ENCODE measurements at regions of chr12 and their contacts with region 1.

Region 1: GRCh38 chr12:48157018-48157888 is at the start of gene ASB8:
- DNase-seq: peak; percentile 96
- ATAC-seq: peak; percentile 93
- H3K4me3 ChIP-seq: peak within 1 kb of the TSS; percentile 83 to 98
- H3K27ac ChIP-seq: peak within 1 kb of the TSS; percentile 36
- H3K4me1 ChIP-seq: peaks cover 8% of the 10 kb centered on the region in 2 experiments
- H3K27me3 ChIP-seq: no peaks in the 10 kb centered on the region
- CTCF ChIP-seq: peak; percentile 18 to 47 (median 44); a peak in 3 of 6 replicates
- POLR2A ChIP-seq: peak; percentile 73
- RAD21 ChIP-seq: no peak
- total RNA-seq, gene ASB8: 14.0 TPM

Region 2: DNA sequence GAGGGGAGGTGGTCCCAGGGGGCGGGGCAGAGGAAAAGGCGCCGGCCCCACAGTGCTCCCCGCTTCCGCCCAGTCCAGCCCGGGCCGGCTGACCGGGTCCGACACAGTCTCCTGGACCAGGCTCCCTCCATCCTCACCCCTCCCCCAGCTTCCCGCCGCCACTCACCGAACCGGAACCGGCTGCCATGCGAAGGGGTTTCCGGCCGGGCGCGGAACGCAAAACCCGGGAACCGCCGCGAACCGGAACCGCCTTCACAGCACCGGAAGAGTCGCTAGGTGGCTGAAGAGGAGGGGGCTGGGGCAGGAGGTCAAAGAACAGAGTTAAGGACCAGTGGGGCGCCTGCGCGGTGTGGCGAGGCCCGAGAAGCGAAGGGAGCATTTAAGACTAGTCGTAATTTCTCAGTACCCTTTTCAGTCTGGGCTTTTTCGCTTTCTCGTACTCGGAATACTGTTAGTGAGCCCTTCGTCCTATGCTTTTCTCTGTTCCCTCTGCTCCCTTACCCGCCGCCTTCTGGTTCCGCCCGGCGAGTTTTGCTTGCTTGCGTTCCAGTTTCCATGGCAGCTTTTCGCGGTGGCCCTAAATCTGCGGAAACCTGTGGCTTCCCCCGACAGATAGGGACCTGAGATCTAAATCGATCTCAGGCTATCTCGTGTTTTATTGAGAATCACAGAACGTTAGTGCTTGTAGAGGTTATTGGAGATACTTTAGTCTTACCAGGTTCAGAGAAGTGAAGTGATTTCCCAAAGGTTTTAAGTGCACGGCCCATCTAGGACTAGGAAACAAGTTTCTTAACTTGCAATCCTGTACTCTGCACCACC is 51.2 kb before region 1 on chr12 and contains the start of gene SENP1:
- CTCF ChIA-PET with region 1: no interaction called
- POLR2A ChIA-PET with region 1: no interaction called
- RAD21 ChIA-PET with region 1: no interaction called
- intact Hi-C with region 1: loop called (anchors 5 kb)
- DNase-seq: peak; percentile 78
- ATAC-seq: peak; percentile 88
- H3K4me3 ChIP-seq: peak within 1 kb of the TSS; percentile 79 to 86
- H3K27ac ChIP-seq: peak within 1 kb of the TSS; percentile 65
- H3K4me1 ChIP-seq: peaks cover 14 to 24% of the 10 kb centered on the region in 2 experiments
- H3K27me3 ChIP-seq: no peaks in the 10 kb centered on the region
- CTCF ChIP-seq: no peak; a peak in 1 of 6 replicates
- POLR2A ChIP-seq: peak; percentile 34
- RAD21 ChIP-seq: no peak
- total RNA-seq, gene SENP1: 17.7 TPM